ENCODE measurements at regions of chr3 and their contacts with region 1.

Region 1: DNA sequence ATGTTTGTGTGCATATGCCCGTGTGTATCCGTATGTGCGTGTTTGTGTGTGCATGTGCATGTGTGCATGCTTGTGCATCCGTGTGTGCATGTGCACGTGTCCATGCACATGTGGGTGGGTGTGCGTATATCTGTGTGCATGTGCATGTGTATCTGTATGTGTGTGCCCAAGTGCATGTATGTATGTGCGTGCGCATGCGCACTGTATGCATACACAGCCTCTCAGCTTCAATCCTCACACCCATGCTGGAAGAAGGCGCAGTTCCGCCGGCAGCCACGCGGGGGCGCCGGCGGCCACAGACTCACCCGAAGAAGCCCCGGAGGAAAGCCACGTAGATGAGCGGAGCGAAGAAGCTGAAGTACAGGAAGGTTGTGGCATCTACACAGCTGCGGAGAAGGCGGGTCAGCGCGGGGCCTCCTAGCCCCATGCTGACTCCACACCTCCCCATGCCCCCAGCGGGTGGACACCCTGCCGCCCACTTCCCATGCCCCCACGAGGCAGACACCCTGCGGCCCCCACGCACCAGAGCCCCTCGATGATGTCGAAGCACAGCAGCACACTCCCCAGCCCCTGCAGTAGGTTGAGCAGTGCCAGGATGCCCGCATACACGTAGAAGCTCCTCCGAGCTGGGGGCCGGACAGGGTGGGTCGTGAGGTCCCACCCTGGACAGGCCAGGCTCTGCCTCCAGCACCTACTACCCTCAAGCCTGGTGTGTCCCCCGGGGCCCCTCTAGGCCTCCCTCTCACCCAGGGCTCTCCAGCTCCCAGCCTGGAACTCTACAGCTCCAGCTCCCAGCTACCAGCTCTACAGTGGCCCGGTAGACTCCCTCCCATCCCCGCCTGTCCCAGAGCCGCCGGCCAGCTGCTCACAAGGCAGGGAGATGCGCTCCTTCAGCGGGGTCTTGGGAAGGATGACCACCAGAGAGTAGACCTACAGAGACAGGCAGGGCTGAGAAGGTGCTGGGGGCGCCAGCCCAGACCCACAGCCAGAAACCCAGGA is 15.4 kb downstream of the TPRA1 start:
- H3K4me3 ChIP-seq: no peak overlapping the region
- H3K27ac ChIP-seq: no peak overlapping the region
- H3K4me1 ChIP-seq: no peaks in the 10 kb centered on the region
- CTCF ChIP-seq: peak; percentile 87

Region 2: GRCh38 chr3:127585493-127586413 is 10.6 kb after region 1 on chr3:
- CTCF ChIA-PET with region 1: interaction called, 12 read pairs
- POLR2A ChIA-PET with region 1: interaction called, 4 read pairs
- H3K4me3 ChIP-seq: no peak overlapping the region
- H3K27ac ChIP-seq: no peak overlapping the region
- H3K4me1 ChIP-seq: no peaks in the 10 kb centered on the region
- CTCF ChIP-seq: no peak